HEK293T (cell line): ENCODE measurements at regions of chr12 and their contacts with region 1.

Region 1: DNA sequence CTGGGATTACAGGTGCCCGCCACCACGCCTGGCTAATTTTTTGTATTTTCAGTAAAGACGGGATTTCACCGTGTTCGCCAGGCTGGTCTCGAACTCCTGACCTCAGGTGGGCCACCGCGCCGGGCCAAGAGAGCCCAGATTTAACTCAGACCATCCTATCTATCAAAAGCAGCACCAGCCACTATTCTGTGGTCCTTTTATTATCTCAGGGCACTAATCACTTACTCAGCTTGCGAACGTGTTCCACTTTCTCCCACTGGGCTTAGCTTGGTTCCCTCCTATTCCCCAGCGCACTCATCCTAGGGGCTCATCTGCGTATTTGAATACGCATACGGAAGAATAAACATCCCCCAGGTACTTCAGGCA is 16.2 kb upstream of the AACS start:
- DNase-seq: no peak

Region 2: DNA sequence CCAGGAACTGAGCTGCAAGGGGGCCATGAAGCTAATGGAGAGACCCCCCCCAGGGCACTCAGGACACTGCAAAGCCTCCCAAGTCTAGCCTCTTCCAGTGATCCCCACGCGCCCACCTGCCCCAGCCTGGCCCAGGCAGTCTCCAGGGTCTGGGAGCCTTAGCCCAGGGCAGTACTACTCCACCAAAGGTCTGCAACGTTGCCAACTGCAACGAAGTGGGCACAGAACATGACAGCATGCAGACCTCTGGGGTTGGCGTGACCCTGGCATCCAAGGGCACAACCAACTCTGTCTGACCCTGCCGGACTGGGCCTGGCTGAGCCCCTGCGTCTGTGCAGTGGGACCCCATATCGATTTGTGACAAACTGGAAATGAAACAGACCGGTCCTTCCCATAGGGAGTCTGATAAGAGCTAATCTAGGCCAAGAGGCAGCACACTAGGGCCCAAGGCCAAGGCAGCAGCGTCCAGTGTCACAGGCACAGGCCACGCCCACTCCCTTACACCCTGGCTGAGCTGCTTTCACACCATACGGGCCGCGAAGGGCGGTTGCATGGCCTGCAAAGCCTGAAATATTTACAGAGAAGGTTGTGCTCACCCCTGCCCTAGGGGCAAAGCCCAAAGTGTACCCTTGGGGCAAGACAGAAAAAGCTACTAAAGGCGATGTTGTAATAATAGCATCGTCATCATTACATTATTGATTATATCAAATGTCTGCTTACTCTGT is 558.3 kb before region 1 on chr12:
- CTCF ChIA-PET with region 1: no interaction called
- POLR2A ChIA-PET with region 1: no interaction called
- DNase-seq: no peak

Region 3: DNA sequence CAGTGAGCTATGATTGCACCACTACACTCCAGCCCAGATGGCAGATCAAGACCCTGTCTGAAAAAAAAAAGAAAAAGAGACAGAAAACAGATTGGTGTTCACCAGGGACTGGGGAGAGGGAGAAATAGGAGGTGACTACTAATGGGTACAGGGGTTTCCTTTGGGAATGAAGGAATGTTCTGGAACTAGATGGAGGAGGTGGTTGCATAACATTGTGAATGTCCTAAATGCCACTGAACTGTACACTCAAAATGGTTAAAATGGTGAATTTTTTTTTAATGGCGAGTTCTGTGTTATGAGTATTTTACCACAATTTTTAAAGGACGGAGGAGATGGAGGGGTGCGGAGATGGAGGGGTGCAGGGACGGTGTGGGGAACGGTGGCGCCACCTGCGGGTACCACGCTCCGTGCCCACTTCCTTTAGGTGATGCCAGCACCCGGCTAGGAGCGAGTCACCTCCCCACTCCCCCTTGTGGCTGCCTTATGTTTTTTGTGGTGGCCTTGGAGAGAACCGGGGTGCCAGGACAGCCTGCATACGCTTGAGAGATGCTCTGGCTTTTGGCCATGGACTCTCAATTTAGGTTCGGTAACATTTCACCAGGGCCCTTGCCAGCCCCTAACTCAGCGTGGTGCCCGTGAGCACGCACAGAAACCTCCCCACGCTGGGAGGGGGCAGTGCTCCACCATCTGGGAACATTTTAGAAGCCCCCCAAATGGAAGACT is 150.7 kb before region 1 on chr12:
- CTCF ChIA-PET with region 1: no interaction called
- POLR2A ChIA-PET with region 1: no interaction called
- DNase-seq: no peak

Region 4: DNA sequence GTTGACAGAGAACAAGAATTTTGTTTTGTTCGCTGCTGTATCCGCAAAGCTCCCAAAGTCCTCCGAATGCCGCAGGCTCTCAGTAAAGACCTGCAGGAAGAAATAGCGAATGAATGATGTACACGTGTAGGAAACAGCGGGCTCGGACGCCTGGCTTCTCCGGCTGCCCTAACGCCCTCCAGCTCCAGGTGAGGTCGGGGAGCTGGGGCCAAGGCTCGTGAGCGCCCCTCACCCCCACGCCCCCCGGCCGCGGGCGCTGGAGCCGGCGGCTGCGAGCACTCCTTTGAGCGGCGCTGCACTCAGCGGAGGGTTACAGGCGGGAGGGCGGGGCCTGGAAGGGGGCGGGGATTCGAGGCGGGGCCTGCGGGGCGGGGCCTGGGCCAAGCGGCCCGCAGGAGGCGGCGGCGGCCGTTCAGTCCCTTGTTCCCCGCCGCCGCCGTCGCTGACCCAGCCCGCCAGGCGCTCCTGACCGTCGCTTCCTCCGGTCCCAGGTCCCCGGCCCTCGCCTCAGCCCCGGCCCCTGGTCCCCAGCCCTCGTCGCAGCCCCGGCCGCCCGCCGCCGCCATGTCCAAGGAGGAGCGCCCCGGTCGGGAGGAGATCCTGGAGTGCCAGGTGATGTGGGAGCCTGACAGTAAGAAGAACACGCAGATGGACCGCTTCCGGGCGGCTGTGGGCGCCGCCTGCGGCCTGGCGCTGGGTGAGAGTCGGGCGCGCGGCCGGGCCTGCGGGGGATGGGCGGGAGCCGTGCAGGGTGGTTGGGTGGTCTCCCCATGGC is 16.1 kb after region 1 on chr12 and contains the start of gene AACS:
- CTCF ChIA-PET with region 1: no interaction called
- POLR2A ChIA-PET with region 1: interaction called, 18 read pairs
- DNase-seq: peak; percentile 93